ENCODE measurements at regions of chr10 and their contacts with region 1.

Region 1: GRCh38 chr10:73886085-73886529 is 11.8 kb upstream of the CAMK2G start:
- DNase-seq: peak; percentile 100
- ATAC-seq: peak; percentile 49
- H3K4me3 ChIP-seq: no peak overlapping the region
- H3K27ac ChIP-seq: peak overlapping the region; percentile 82
- H3K4me1 ChIP-seq: peaks cover 57% of the 10 kb centered on the region
- H3K27me3 ChIP-seq: no peaks in the 10 kb centered on the region
- CTCF ChIP-seq: no peak

Region 2: GRCh38 chr10:73088304-73088703 is 797.8 kb before region 1 on chr10:
- CTCF ChIA-PET with region 1: interaction called, 12 read pairs
- POLR2A ChIA-PET with region 1: no interaction called
- intact Hi-C with region 1: no loop called
- DNase-seq: peak; percentile 28
- ATAC-seq: peak; percentile 26
- H3K4me3 ChIP-seq: no peak overlapping the region
- H3K27ac ChIP-seq: no peak overlapping the region
- H3K4me1 ChIP-seq: peaks cover 12% of the 10 kb centered on the region
- H3K27me3 ChIP-seq: no peaks in the 10 kb centered on the region
- CTCF ChIP-seq: no peak

Region 3: GRCh38 chr10:73731588-73732375 is 154.3 kb before region 1 on chr10:
- CTCF ChIA-PET with region 1: no interaction called
- POLR2A ChIA-PET with region 1: no interaction called
- intact Hi-C with region 1: no loop called
- DNase-seq: no peak
- ATAC-seq: no peak
- H3K4me3 ChIP-seq: peak overlapping the region; percentile 69
- H3K27ac ChIP-seq: no peak overlapping the region
- H3K4me1 ChIP-seq: peaks cover 9% of the 10 kb centered on the region
- H3K27me3 ChIP-seq: no peaks in the 10 kb centered on the region
- CTCF ChIP-seq: no peak

Region 4: DNA sequence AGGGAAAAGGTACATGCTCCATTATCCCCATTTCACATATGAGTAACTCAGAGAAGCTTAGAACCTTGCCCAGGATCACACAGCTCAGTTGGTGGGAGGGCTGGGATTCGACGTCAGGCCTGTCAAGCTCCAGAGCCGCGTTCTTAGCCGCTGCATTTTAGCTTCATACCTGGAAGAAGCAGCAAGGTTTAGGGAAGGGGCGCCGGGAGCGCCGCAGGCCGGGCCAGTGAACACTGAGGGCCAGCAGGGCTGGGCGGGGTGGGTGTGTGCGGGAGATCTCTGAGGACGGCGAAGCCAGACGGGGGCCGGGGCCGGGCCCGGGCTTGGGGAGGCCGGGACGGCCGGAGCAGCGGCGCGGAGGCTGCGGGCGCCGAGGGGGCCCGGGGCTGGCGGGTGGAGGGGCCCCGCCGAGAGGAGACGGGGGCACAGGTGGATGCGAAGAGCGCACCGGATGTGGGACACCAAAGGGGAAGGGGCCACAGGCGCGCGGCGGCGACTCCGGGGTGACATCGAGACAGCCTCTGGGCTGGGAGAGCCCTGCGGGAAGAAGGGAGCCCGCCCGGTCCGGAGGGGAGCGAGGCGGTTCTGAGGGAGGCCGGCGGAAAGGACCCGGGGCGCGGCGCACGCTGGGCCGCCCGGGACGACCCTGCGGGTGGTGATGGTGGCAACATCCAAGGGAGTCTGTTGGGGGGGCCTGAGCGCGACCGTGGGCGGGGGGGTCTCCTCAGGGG is 75.2 kb before region 1 on chr10:
- CTCF ChIA-PET with region 1: no interaction called
- POLR2A ChIA-PET with region 1: no interaction called
- intact Hi-C with region 1: no loop called
- DNase-seq: peak; percentile 68
- ATAC-seq: peak; percentile 42
- H3K4me3 ChIP-seq: peak overlapping the region; percentile 79
- H3K27ac ChIP-seq: peak overlapping the region; percentile 22
- H3K4me1 ChIP-seq: peaks cover 4% of the 10 kb centered on the region
- H3K27me3 ChIP-seq: no peaks in the 10 kb centered on the region
- CTCF ChIP-seq: no peak

Region 5: DNA sequence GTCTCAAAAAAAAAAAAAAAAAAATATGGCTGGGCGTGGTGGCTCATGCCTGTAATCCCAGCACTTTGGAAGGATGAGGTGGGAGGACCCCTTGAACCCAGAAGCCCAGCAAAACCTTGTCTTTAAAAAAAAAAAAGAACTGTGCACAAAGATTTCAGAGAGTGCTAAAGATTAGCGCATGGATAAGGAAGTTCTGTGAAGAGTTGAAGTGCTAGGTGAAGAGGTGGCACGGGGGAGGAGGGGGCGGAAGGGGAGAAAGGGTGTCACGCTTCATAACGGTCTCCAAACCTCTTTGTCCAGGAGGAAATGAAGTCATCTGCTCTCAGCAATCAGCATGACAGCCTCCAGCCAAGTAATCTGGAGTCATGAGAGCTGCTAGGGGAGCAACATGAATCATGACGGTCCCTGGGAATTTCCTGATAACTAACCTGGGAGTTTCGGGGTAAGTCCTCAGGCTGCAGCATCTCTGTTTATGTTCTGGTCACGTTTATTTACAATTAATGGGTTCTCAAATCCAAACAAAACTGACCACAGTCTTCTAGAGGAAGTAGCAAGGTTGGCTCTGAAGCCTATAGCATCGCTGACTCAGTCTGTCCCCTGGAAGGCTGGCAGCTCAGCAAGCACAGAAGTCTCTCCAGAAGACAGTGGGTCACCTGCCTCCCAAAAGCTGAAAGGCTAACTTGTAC is 22.9 kb after region 1 on chr10:
- CTCF ChIA-PET with region 1: interaction called, 90 read pairs
- POLR2A ChIA-PET with region 1: interaction called, 182 read pairs
- intact Hi-C with region 1: loop called (anchors 1 kb)
- DNase-seq: peak; percentile 100
- ATAC-seq: peak; percentile 37
- H3K4me3 ChIP-seq: peak overlapping the region; percentile 68
- H3K27ac ChIP-seq: peak overlapping the region; percentile 78
- H3K4me1 ChIP-seq: peaks cover 88% of the 10 kb centered on the region
- H3K27me3 ChIP-seq: no peaks in the 10 kb centered on the region
- CTCF ChIP-seq: no peak

Region 6: DNA sequence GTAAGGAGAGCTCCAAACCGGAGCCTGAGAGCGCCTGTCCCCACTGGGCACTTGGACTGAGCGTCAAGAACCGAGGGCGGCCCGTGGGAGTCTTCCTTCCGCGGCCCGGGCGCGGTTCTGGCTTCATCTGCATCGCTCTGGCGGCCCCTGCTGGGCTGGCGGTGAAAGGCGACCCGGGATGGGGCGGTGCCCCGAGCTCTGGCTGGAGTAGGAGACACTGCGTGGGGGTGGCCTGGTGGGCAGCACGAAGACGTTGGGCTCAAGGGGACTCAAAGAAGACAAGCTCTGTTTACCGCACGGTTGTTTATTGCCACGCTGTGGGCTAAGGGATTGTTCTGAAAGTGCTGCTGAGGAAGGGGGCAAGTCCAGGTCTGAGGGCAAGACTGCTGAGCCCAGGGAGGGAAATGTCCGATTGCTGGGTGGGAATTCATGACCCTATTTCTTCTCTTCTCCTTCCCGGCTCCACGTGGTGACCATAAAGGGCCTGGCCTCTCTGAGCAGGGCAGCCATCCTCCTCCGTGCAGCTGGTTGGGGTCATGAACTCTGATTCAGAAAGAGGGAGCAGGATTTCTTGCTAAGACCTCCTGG is 54.6 kb after region 1 on chr10:
- CTCF ChIA-PET with region 1: interaction called, 317 read pairs
- POLR2A ChIA-PET with region 1: interaction called, 29 read pairs
- intact Hi-C with region 1: loop called (anchors 1 kb)
- DNase-seq: peak; percentile 100
- ATAC-seq: peak; percentile 85
- H3K4me3 ChIP-seq: peak overlapping the region; percentile 38
- H3K27ac ChIP-seq: peak overlapping the region; percentile 74
- H3K4me1 ChIP-seq: peaks cover 31% of the 10 kb centered on the region
- H3K27me3 ChIP-seq: no peaks in the 10 kb centered on the region
- CTCF ChIP-seq: peak; percentile 100

Region 7: GRCh38 chr10:73997787-73998622 is 111.9 kb after region 1 on chr10 and contains the start of gene VCL:
- CTCF ChIA-PET with region 1: interaction called, 15 read pairs
- POLR2A ChIA-PET with region 1: interaction called, 14 read pairs
- intact Hi-C with region 1: loop called (anchors 1 kb)
- DNase-seq: peak; percentile 100
- ATAC-seq: peak; percentile 83
- H3K4me3 ChIP-seq: peak within 1 kb of the TSS; percentile 73
- H3K27ac ChIP-seq: peak within 1 kb of the TSS; percentile 66
- H3K4me1 ChIP-seq: peaks cover 32% of the 10 kb centered on the region
- H3K27me3 ChIP-seq: no peaks in the 10 kb centered on the region
- CTCF ChIP-seq: no peak
- total RNA-seq, gene VCL: 382 and 445 TPM in 2 replicates

Region 8: GRCh38 chr10:74058658-74059057 is 172.6 kb after region 1 on chr10:
- CTCF ChIA-PET with region 1: interaction called, 5 read pairs
- POLR2A ChIA-PET with region 1: interaction called, 5 read pairs
- intact Hi-C with region 1: loop called (anchors 1 kb)
- DNase-seq: peak; percentile 77
- ATAC-seq: no peak
- H3K4me3 ChIP-seq: no peak overlapping the region; the same call in 1 of the 2 replicates
- H3K27ac ChIP-seq: peak overlapping the region; percentile 71
- H3K4me1 ChIP-seq: peaks cover 55% of the 10 kb centered on the region
- H3K27me3 ChIP-seq: no peaks in the 10 kb centered on the region
- CTCF ChIP-seq: peak; percentile 75

Region 9: GRCh38 chr10:74134240-74134820 is 248.2 kb after region 1 on chr10:
- CTCF ChIA-PET with region 1: no interaction called
- POLR2A ChIA-PET with region 1: interaction called, 10 read pairs
- intact Hi-C with region 1: no loop called
- DNase-seq: no peak
- ATAC-seq: no peak
- H3K4me3 ChIP-seq: no peak overlapping the region
- H3K27ac ChIP-seq: no peak overlapping the region
- H3K4me1 ChIP-seq: no peaks in the 10 kb centered on the region
- H3K27me3 ChIP-seq: no peaks in the 10 kb centered on the region
- CTCF ChIP-seq: no peak